ENCODE measurements at regions of chr11 and their contacts with region 1.

Region 1: DNA sequence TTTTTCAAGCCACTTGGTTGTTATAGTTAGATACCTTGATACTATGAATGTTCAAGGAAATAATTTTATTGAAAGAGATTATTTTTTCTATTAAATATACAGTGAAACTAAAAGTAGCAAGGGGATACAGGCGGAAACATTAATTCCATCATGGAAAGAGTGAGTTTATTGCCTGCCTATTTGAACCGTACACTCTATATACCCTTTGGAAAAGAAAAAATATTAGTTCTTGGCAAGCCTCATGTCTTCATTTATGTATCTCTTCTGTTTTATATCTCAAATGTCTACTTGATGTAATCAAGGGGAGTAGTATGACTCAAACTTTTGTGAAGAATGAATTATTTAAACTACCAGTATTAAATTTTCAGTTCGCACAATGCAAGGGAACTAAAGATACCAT is 54.0 kb downstream of the GAS2 start:
- DNase-seq: no peak
- H3K4me3 ChIP-seq: no peak overlapping the region
- H3K27ac ChIP-seq: no peak overlapping the region
- H3K4me1 ChIP-seq: peaks cover 5% of the 10 kb centered on the region
- H3K27me3 ChIP-seq: no peaks in the 10 kb centered on the region
- CTCF ChIP-seq: no peak

Region 2: DNA sequence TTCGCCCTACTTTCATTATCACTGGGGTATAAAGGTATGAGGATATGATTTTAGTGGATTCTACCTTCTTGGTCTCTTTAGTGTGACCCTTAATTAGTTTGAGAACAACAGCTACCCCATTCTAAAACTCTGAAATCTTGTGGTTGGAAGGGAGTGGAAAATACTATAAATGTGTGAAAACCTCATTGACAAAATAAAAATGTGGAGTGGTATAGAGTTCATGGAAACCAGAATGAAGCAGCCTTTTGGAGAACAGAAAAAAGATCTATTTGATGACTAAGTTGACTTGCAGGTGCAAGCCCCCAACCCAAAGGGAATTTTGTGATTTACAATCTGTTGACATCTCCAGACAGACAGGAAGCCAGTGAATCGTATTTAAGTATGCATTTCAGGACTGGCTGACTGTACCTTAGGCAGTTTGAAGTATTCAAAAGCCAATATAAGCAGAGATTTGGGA is 21.7 kb after region 1 on chr11:
- CTCF ChIA-PET with region 1: no interaction called
- POLR2A ChIA-PET with region 1: no interaction called
- intact Hi-C with region 1: loop called (anchors 1 kb)
- DNase-seq: peak; percentile 6
- H3K4me3 ChIP-seq: no peak overlapping the region
- H3K27ac ChIP-seq: no peak overlapping the region
- H3K4me1 ChIP-seq: peaks cover 15% of the 10 kb centered on the region
- H3K27me3 ChIP-seq: no peaks in the 10 kb centered on the region
- CTCF ChIP-seq: no peak